Endothelial cell of umbilical vein (primary cell): ENCODE measurements at regions of chr2 and their contacts with region 1.

Region 1: GRCh38 chr2:42296226-42296625 is 64.8 kb downstream of the COX7A2L start:
- DNase-seq: no peak
- H3K4me3 ChIP-seq: no peak overlapping the region
- H3K27ac ChIP-seq: no peak overlapping the region
- H3K4me1 ChIP-seq: peaks cover 15% of the 10 kb centered on the region
- H3K27me3 ChIP-seq: no peaks in the 10 kb centered on the region
- CTCF ChIP-seq: no peak
- POLR2A ChIP-seq: no peak

Region 2: GRCh38 chr2:42314892-42315467 is 18.8 kb after region 1 on chr2:
- CTCF ChIA-PET with region 1: no interaction called
- POLR2A ChIA-PET with region 1: no interaction called
- dilution Hi-C with region 1: no loop called
- intact Hi-C with region 1: loop called (anchors 2 kb)
- DNase-seq: peak; percentile 69
- H3K4me3 ChIP-seq: no peak overlapping the region
- H3K27ac ChIP-seq: no peak overlapping the region
- H3K4me1 ChIP-seq: peaks cover 11% of the 10 kb centered on the region
- H3K27me3 ChIP-seq: no peaks in the 10 kb centered on the region
- CTCF ChIP-seq: no peak
- POLR2A ChIP-seq: no peak

Region 3: GRCh38 chr2:42796427-42797248 is 500.4 kb after region 1 on chr2:
- CTCF ChIA-PET with region 1: no interaction called
- POLR2A ChIA-PET with region 1: no interaction called
- dilution Hi-C with region 1: no loop called
- intact Hi-C with region 1: no loop called
- DNase-seq: no peak
- H3K4me3 ChIP-seq: no peak overlapping the region
- H3K27ac ChIP-seq: no peak overlapping the region
- H3K4me1 ChIP-seq: peaks cover 4% of the 10 kb centered on the region
- H3K27me3 ChIP-seq: peaks cover 8 to 11% of the 10 kb centered on the region in 2 experiments
- CTCF ChIP-seq: no peak
- POLR2A ChIP-seq: no peak